HCT116 (cell line): ENCODE measurements at regions of chr17 and their contacts with region 1.

Region 1: DNA sequence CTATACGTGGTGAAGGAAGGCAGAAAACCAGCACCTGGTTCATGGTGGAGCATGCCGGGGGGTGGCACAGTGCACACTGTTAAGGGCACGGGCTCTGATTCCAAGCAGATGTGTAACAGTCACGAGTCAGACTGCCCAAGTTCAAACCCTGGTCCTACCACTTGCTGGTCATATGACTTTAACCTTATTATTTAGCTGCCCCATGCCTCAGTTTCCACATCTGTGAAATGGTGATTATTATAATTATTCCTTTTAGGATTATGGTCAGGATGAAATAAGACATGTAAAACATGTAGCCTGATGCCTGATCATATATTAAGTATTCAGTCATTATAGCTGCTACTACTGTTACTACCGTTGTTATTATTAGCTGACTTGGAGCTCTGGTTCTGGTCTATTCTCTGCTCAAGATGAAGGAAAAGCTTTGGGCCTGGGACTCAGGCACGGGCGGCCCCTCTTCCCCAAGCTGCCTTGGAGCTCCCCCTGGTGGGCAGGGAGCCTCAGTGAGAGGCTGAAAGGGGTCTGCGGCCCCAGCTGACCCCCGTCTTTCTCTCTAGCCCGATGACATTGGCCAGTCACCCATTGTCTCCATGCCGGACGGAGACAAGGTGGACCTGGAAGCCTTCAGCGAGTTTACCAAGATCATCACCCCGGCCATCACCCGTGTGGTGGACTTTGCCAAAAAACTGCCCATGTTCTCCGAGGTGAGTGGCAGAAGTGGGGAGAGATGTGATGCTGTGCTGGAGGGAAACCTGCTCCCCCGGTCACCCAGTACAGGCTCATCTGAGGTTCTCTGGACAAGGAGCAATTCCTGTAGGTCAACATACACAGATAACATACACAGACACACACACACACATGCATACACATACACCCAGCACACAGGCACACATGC is 14.0 kb downstream of the NR1D1 start:
- DNase-seq: no peak
- ATAC-seq: peak; percentile 70
- H3K4me3 ChIP-seq: no peak overlapping the region
- H3K27ac ChIP-seq: no peak overlapping the region
- H3K4me1 ChIP-seq: peaks cover under 1 to 13% of the 10 kb centered on the region in 2 experiments; a peak in 3 of 4 replicates
- H3K27me3 ChIP-seq: no peaks in the 10 kb centered on the region
- CTCF ChIP-seq: peak; percentile 77 to 92 (median 78)
- POLR2A ChIP-seq: no peak
- RAD21 ChIP-seq: peak; percentile 87

Region 2: DNA sequence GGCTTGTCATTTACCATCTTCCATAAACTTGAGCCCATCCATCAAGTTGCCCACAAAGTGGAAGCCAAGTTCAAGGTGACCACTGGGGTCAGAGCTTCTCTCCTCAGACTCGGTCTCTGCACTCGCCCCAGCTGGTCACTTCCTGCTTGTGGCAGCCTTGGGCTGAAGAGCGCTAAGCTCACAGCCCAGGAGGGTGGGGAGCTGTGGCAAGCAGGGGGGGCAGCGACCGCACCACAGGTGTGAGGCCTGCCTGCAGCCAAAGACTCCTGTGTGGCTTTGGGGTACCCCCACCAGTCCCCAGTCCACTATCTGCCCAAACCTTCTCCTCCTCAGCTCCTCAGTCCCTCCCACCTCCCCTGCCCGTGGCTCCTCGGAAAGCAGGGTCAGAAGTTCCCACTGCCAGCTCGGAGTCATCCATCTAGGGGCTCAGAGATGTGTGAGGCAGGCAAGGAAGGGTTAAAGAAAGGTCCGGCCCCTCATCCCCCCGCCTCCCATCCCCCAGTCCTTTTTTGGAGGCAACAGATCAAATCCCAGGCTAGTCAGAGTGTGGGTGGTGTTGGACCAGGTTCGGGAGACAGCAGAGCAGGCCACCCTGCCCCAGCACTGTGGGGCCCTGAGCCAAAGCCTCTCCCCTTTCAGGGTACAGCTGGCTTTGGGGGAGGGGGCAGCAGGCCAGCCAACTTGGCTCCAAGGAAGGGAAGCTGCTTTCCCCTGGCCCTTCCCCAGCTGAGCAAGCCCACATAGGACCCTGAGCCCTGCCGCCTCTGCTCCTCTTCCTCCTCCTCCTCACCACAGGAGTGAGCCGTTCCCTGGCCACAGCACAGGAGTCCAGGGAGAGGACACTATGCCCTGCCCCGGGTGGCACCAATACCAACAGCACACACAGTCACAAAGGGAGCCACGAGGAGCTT is 67.9 kb before region 1 on chr17:
- CTCF ChIA-PET with region 1: interaction called, 5 read pairs
- POLR2A ChIA-PET with region 1: no interaction called
- RAD21 ChIA-PET with region 1: interaction called in 1 of 2 experiments, 3 read pairs
- intact Hi-C with region 1: loop called (anchors 1 kb)
- DNase-seq: no peak
- ATAC-seq: no peak
- H3K4me3 ChIP-seq: no peak overlapping the region
- H3K27ac ChIP-seq: no peak overlapping the region
- H3K4me1 ChIP-seq: peaks cover 0 to 13% of the 10 kb centered on the region in 2 experiments; a peak in 2 of 4 replicates
- H3K27me3 ChIP-seq: no peaks in the 10 kb centered on the region
- CTCF ChIP-seq: no peak
- POLR2A ChIP-seq: no peak
- RAD21 ChIP-seq: no peak

Region 3: DNA sequence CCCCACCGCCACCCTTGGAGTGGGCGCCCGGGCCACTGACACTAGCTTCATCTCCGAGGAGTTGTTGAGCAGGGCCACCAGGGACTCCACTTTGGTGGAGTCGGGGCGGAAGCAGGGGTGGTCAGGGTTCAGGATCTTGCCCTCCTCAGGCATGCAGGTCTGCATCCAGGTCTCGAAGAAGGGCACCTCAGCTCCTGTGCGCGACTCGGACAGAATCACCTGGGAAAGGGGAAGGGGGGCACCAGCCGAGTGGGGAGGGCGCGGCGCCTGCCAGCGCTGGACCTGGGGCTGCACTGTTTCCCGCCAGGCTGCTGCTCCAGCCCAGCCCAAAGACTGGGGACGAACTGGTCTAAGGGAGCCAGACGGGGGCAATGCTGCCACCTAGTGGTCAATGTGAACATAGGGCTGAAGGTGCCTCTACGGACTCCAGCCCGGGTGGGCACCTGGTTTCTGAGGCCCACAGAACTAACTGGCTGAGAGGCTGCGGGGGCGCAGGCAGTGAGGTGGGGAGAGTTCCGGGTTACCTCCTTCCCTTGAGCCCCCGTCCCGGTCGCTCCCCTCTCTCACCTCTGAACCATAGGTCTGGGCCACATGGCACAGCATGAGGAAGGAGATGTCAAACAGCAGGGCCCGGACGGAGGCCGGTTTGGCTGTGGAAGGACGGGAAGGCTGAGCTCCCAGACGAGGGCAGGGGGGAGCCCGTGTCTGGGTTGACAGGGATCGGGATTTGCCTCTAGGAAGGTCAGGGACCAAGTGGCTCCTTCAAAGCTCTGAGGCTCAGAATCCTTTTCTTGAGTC is 59.4 kb before region 1 on chr17:
- CTCF ChIA-PET with region 1: interaction called, 9 read pairs
- POLR2A ChIA-PET with region 1: no interaction called
- RAD21 ChIA-PET with region 1: no interaction called
- intact Hi-C with region 1: loop called (anchors 5 kb)
- DNase-seq: peak; percentile 50
- ATAC-seq: peak; percentile 98
- H3K4me3 ChIP-seq: no peak overlapping the region
- H3K27ac ChIP-seq: peak overlapping the region; percentile 13; the same call in 1 of the 2 replicates
- H3K4me1 ChIP-seq: peaks cover 2 to 15% of the 10 kb centered on the region in 2 experiments; a peak in 2 of 4 replicates
- H3K27me3 ChIP-seq: no peaks in the 10 kb centered on the region
- CTCF ChIP-seq: peak; percentile 72 to 89 (median 87)
- POLR2A ChIP-seq: no peak
- RAD21 ChIP-seq: peak; percentile 73

Region 4: GRCh38 chr17:40038882-40039513 is 47.4 kb before region 1 on chr17:
- CTCF ChIA-PET with region 1: interaction called, 12 read pairs
- POLR2A ChIA-PET with region 1: no interaction called
- RAD21 ChIA-PET with region 1: no interaction called
- intact Hi-C with region 1: loop called (anchors 2 kb)
- DNase-seq: peak; percentile 37
- ATAC-seq: peak; percentile 64
- H3K4me3 ChIP-seq: no peak overlapping the region
- H3K27ac ChIP-seq: no peak overlapping the region
- H3K4me1 ChIP-seq: peaks cover 3 to 8% of the 10 kb centered on the region in 2 experiments; a peak in 3 of 4 replicates
- H3K27me3 ChIP-seq: no peaks in the 10 kb centered on the region
- CTCF ChIP-seq: peak; percentile 36 to 81 (median 76); a peak in 5 of 6 replicates
- POLR2A ChIP-seq: no peak
- RAD21 ChIP-seq: peak; percentile 56

Region 5: GRCh38 chr17:40075201-40075941 is 11.0 kb before region 1 on chr17:
- CTCF ChIA-PET with region 1: interaction called, 15 read pairs
- POLR2A ChIA-PET with region 1: interaction called, 3 read pairs
- RAD21 ChIA-PET with region 1: no interaction called
- intact Hi-C with region 1: no loop called
- DNase-seq: no peak
- ATAC-seq: peak; percentile 76
- H3K4me3 ChIP-seq: no peak overlapping the region
- H3K27ac ChIP-seq: peak overlapping the region; percentile 52; the same call in 1 of the 2 replicates
- H3K4me1 ChIP-seq: peaks cover 50 to 52% of the 10 kb centered on the region in 2 experiments
- H3K27me3 ChIP-seq: no peaks in the 10 kb centered on the region
- CTCF ChIP-seq: peak in 2 of 3 experiments; percentile 90 to 91; a peak in 5 of 6 replicates
- POLR2A ChIP-seq: no peak
- RAD21 ChIP-seq: no peak

Region 6: DNA sequence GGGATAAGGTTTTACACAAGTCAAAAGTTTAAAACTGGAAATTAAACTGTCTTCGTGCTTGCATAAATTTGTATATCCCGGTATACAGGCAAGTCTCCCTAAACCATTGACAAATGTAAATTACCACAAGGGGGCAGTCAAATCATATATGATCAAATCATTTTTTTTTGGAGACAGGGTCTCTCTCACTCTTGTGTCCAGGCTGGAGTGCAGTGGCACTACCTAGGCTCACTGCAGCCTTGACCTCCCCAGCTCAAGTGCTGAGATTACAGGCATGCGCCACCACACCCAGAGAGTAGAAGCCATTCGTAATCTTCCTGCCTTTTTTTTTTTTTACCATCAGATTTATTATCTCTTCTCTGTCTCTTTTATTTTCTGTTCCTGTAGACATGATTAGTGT is 312.8 kb after region 1 on chr17:
- CTCF ChIA-PET with region 1: no interaction called
- POLR2A ChIA-PET with region 1: no interaction called
- RAD21 ChIA-PET with region 1: no interaction called
- intact Hi-C with region 1: no loop called
- DNase-seq: peak; percentile 32
- ATAC-seq: peak; percentile 86
- H3K4me3 ChIP-seq: no peak overlapping the region
- H3K27ac ChIP-seq: no peak overlapping the region
- H3K4me1 ChIP-seq: no peaks in the 10 kb centered on the region
- H3K27me3 ChIP-seq: no peaks in the 10 kb centered on the region
- CTCF ChIP-seq: peak; percentile 41 to 67 (median 42); a peak in 4 of 6 replicates
- POLR2A ChIP-seq: no peak
- RAD21 ChIP-seq: peak; percentile 49